Calu3 (cell line): ENCODE measurements at regions of chr15 and their contacts with region 1.

Region 1: GRCh38 chr15:55168329-55168974 is 28.3 kb downstream of the RSL24D1 start:
- DNase-seq: peak; percentile 83
- H3K4me3 Mint-ChIP-seq: no peak overlapping the region
- H3K27ac Mint-ChIP-seq: no peak overlapping the region
- H3K4me1 Mint-ChIP-seq: peaks cover 9% of the 10 kb centered on the region
- H3K27me3 Mint-ChIP-seq: no peaks in the 10 kb centered on the region
- CTCF ChIP-seq: peak; percentile 90

Region 2: DNA sequence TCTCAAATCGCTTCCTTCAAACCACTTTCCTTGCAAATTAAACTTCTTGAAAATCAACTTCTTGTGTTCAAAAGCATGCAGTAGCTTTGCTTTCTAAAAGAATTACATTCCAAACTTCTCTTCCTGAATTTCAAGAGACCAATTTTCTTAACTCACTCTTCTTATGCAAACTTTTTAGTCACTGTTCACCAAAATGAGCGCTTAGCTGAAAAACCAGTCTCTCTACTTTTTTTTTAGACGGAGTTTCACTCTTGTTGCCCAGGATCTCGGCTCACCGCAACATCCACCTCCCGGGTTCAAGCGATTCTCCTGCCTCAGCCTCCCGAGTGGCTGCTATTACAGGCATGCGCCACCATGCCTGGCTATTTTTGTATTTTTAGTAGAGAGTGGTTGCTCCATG is 1269.1 kb before region 1 on chr15:
- CTCF ChIA-PET with region 1: no interaction called
- intact Hi-C with region 1: loop called (anchors 10 kb)
- DNase-seq: no peak
- H3K4me3 Mint-ChIP-seq: peak overlapping the region; percentile 54
- H3K27ac Mint-ChIP-seq: peak overlapping the region; percentile 13
- H3K4me1 Mint-ChIP-seq: peaks cover 12% of the 10 kb centered on the region
- H3K27me3 Mint-ChIP-seq: no peaks in the 10 kb centered on the region
- CTCF ChIP-seq: no peak

Region 3: GRCh38 chr15:53962332-53963241 is 1205.9 kb before region 1 on chr15:
- CTCF ChIA-PET with region 1: no interaction called
- intact Hi-C with region 1: loop called (anchors 1 kb)
- DNase-seq: peak; percentile 67
- H3K4me3 Mint-ChIP-seq: no peak overlapping the region
- H3K27ac Mint-ChIP-seq: no peak overlapping the region
- H3K4me1 Mint-ChIP-seq: no peaks in the 10 kb centered on the region
- H3K27me3 Mint-ChIP-seq: no peaks in the 10 kb centered on the region
- CTCF ChIP-seq: peak; percentile 73

Region 4: DNA sequence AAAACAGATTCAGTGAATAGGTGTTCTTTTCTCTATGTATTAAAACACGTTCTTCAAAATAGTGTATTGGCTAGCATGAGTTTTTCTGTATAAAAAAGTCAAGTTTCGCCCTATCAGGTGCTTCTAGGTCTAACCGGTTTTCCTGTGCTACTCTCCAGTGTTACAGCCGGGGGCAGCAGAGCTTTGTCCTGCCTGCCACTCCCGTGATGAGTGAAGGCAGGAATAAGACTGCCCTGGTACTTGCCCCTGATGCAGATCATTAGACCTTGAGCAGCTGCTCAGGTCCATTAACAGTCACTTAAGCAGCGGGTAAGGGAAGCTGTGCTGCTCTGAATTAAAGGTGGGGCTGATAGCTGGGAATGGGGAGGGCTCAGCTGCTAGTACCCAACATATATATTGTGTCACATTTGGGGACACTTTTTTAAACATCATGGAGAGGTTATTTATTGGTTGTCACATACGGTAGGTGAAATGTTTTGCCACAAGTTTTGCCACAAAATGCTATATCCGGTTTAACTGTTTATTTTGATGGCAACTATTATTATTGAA is 1191.5 kb before region 1 on chr15:
- CTCF ChIA-PET with region 1: interaction called, 3 read pairs
- intact Hi-C with region 1: loop called (anchors 5 kb)
- DNase-seq: peak; percentile 69
- H3K4me3 Mint-ChIP-seq: no peak overlapping the region
- H3K27ac Mint-ChIP-seq: no peak overlapping the region
- H3K4me1 Mint-ChIP-seq: peaks cover 7% of the 10 kb centered on the region
- H3K27me3 Mint-ChIP-seq: no peaks in the 10 kb centered on the region
- CTCF ChIP-seq: peak; percentile 50

Region 5: GRCh38 chr15:54082836-54083492 is 1085.5 kb before region 1 on chr15:
- CTCF ChIA-PET with region 1: no interaction called
- intact Hi-C with region 1: loop called (anchors 2 kb)
- DNase-seq: peak; percentile 20
- H3K4me3 Mint-ChIP-seq: no peak overlapping the region
- H3K27ac Mint-ChIP-seq: no peak overlapping the region
- H3K4me1 Mint-ChIP-seq: no peaks in the 10 kb centered on the region
- H3K27me3 Mint-ChIP-seq: no peaks in the 10 kb centered on the region
- CTCF ChIP-seq: peak; percentile 87

Region 6: DNA sequence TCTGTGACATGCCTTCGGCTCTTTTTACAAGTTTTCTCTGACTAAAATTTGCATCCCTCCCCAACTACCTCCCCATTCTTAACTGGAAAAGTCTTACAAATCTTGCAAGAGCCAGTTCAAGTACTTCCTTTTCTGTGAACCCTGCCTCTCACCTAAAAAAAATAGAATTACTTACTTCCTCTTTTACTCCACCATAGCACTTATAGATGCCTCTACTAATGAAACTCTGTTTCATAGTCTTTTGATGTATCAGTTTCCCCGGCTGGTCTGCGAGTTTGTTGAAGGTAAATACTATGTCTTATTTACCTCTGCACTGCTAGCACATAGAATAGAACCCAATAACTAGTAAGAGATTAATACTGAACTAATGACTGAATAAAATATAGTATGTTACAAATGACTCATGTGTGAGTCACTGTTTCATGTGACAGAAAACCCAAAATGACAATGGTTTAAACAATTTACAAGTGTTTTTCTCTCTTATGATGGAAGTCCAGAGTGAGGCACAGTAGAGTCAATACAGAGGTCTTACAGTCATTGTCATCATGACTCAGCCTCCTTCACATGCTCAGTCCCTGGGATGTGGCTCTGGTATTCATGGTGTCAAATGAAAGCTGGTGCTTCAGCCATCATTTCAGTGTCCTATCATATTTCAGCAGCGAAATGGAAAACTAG is 365.2 kb before region 1 on chr15:
- CTCF ChIA-PET with region 1: no interaction called
- intact Hi-C with region 1: loop called (anchors 10 kb)
- DNase-seq: peak; percentile 29
- H3K4me3 Mint-ChIP-seq: peak overlapping the region; percentile 1
- H3K27ac Mint-ChIP-seq: peak overlapping the region; percentile 86
- H3K4me1 Mint-ChIP-seq: peaks cover 6% of the 10 kb centered on the region
- H3K27me3 Mint-ChIP-seq: no peaks in the 10 kb centered on the region
- CTCF ChIP-seq: no peak